ENCODE measurements at regions of chr12 and their contacts with region 1.

Region 1: DNA sequence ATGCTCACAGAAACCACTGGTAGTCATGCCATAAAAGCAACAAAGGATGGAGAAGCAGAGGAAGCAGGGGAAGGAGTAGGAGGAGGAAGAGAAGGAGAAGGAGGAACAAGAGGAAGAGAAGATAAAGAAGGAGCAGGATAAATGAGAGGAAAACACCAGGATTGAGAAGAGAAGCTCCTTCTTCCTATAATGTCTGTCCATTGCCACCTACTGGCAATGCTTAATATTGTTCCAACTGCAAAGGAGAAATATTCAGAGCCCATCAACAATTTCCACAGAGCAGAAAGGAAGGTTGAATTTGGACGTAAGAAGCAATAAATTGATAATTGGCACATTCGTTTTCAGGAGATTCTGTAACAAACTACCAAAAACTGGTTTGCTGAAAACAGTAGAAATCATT is 898.4 kb downstream of the SLC16A7 start:
- DNase-seq: no peak
- ATAC-seq: no peak
- H3K4me3 ChIP-seq: no peak overlapping the region
- H3K27ac ChIP-seq: no peak overlapping the region
- H3K4me1 ChIP-seq: no peaks in the 10 kb centered on the region
- H3K27me3 ChIP-seq: no peaks in the 10 kb centered on the region
- CTCF ChIP-seq: peak; percentile 12

Region 2: GRCh38 chr12:60421741-60422140 is 72.5 kb before region 1 on chr12:
- intact Hi-C with region 1: no loop called
- DNase-seq: no peak
- ATAC-seq: no peak
- H3K4me3 ChIP-seq: no peak overlapping the region
- H3K27ac ChIP-seq: no peak overlapping the region
- H3K4me1 ChIP-seq: no peaks in the 10 kb centered on the region
- H3K27me3 ChIP-seq: no peaks in the 10 kb centered on the region
- CTCF ChIP-seq: no peak

Region 3: GRCh38 chr12:60441577-60441976 is 52.7 kb before region 1 on chr12:
- intact Hi-C with region 1: loop called in 1 of 2 experiments (anchors 1 kb)
- DNase-seq: no peak
- ATAC-seq: no peak
- H3K4me3 ChIP-seq: no peak overlapping the region
- H3K27ac ChIP-seq: no peak overlapping the region
- H3K4me1 ChIP-seq: no peaks in the 10 kb centered on the region
- H3K27me3 ChIP-seq: no peaks in the 10 kb centered on the region
- CTCF ChIP-seq: no peak

Region 4: GRCh38 chr12:60577607-60578006 is 83.4 kb after region 1 on chr12:
- intact Hi-C with region 1: no loop called
- DNase-seq: no peak
- ATAC-seq: no peak
- H3K4me3 ChIP-seq: no peak overlapping the region
- H3K27ac ChIP-seq: no peak overlapping the region
- H3K4me1 ChIP-seq: no peaks in the 10 kb centered on the region
- H3K27me3 ChIP-seq: no peaks in the 10 kb centered on the region
- CTCF ChIP-seq: no peak